PC-3 (cell line): ENCODE measurements at regions of chr1 and their contacts with region 1.

Region 1: DNA sequence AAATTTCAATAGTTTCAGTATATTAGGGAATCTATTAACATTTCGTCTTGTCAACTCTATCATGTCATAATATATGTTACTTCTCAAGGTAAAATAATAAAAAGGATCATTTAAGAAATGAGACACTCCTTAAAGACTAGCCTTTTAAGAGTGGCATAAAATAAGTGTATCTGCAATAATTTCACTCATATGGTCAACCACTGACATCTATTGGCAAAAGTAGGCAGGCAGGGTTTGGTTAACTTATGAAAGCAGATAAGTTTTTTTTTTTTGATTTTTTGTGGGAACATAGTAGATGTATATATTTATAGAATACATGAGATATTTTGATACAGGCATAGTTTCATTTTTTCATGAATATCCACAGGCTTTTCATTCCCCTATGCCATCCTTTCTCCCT is 5.5 kb upstream of the RGS21 start:
- DNase-seq: peak; percentile 34
- ATAC-seq: peak; percentile 51
- H3K4me3 ChIP-seq: no peak overlapping the region
- H3K27ac ChIP-seq: no peak overlapping the region
- H3K4me1 ChIP-seq: no peaks in the 10 kb centered on the region
- H3K27me3 ChIP-seq: no peaks in the 10 kb centered on the region
- CTCF ChIP-seq: peak; percentile 54

Region 2: DNA sequence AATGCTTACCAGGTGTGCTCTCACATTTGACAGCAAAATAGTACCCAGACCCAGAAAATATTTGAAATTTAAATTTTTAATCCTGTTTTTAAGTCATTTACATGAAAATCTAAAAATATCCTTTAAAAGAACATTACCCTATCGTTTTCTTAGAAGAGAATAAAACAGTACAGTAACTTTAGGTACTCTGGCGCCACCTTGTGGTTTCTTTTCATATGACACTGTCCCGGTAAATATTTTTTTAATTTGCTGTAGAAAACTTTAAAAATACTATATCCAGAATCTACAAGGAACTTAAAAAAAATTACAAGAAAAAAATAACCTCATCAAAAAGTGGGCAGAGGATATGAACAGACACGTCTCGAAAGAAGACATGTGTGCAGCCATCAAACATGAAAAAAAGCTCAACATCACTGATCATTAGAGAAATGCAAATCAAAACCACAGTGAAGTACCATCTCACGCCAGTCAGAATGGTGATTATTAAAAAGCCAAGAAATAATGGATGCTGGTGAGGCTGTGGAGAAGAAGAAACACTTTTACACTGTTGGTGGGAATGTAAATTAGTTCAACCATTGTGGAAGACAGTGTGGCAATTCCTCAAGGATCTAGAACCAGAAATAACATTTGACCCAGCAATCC is 134.7 kb after region 1 on chr1:
- CTCF ChIA-PET with region 1: no interaction called
- POLR2A ChIA-PET with region 1: no interaction called
- intact Hi-C with region 1: loop called (anchors 5 kb)
- DNase-seq: peak; percentile 61
- ATAC-seq: no peak
- H3K4me3 ChIP-seq: no peak overlapping the region
- H3K27ac ChIP-seq: no peak overlapping the region
- H3K4me1 ChIP-seq: peaks cover 17% of the 10 kb centered on the region
- H3K27me3 ChIP-seq: no peaks in the 10 kb centered on the region
- CTCF ChIP-seq: peak; percentile 70